K562 (cell line): ENCODE measurements at regions of chr9 and their contacts with region 1.

Region 1: GRCh38 chr9:13088720-13089427 is 190.6 kb downstream of the MPDZ start:
- DNase-seq: peak; percentile 47 to 58 (median 50)
- ATAC-seq: peak; percentile 70; the same call in 2 of the 3 replicates
- H3K4me3 ChIP-seq: no peak overlapping the region
- H3K27ac ChIP-seq: no peak overlapping the region
- H3K4me1 ChIP-seq: no peaks in the 10 kb centered on the region
- H3K27me3 ChIP-seq: no peaks in the 10 kb centered on the region
- CTCF ChIP-seq: peak; percentile 22 to 59 (median 39); a peak in 4 of 6 replicates
- EP300 ChIP-seq: no peak
- POLR2A ChIP-seq: no peak
- RAD21 ChIP-seq: peak; percentile 35 to 52

Region 2: GRCh38 chr9:12813960-12814876 is 274.7 kb before region 1 on chr9:
- CTCF ChIA-PET with region 1: no interaction called
- POLR2A ChIA-PET with region 1: no interaction called
- in situ Hi-C with region 1: no loop called
- intact Hi-C with region 1: no loop called
- DNase-seq: peak in 1 of 4 experiments; percentile 6
- ATAC-seq: 0 out of 3 replicates have a peak, but pooled peaks have one; percentile 32
- H3K4me3 ChIP-seq: no peak overlapping the region
- H3K27ac ChIP-seq: no peak overlapping the region
- H3K4me1 ChIP-seq: no peaks in the 10 kb centered on the region
- H3K27me3 ChIP-seq: no peaks in the 10 kb centered on the region
- CTCF ChIP-seq: no peak
- EP300 ChIP-seq: no peak
- POLR2A ChIP-seq: no peak
- RAD21 ChIP-seq: no peak

Region 3: GRCh38 chr9:13033959-13034693 is 54.7 kb before region 1 on chr9:
- CTCF ChIA-PET with region 1: interaction called, 10 read pairs
- POLR2A ChIA-PET with region 1: no interaction called
- in situ Hi-C with region 1: no loop called
- intact Hi-C with region 1: loop called (anchors 2 kb)
- DNase-seq: peak; percentile 43 to 66 (median 54)
- ATAC-seq: peak; percentile 91
- H3K4me3 ChIP-seq: no peak overlapping the region
- H3K27ac ChIP-seq: no peak overlapping the region
- H3K4me1 ChIP-seq: no peaks in the 10 kb centered on the region
- H3K27me3 ChIP-seq: no peaks in the 10 kb centered on the region
- CTCF ChIP-seq: peak; percentile 60 to 75 (median 70)
- EP300 ChIP-seq: no peak
- POLR2A ChIP-seq: no peak
- RAD21 ChIP-seq: peak; percentile 64 to 75

Region 4: GRCh38 chr9:13139641-13140171 is 50.8 kb after region 1 on chr9:
- CTCF ChIA-PET with region 1: no interaction called
- POLR2A ChIA-PET with region 1: no interaction called
- in situ Hi-C with region 1: no loop called
- intact Hi-C with region 1: no loop called
- DNase-seq: no peak
- ATAC-seq: no peak
- H3K4me3 ChIP-seq: no peak overlapping the region
- H3K27ac ChIP-seq: no peak overlapping the region
- H3K4me1 ChIP-seq: no peaks in the 10 kb centered on the region
- H3K27me3 ChIP-seq: no peaks in the 10 kb centered on the region
- CTCF ChIP-seq: no peak
- EP300 ChIP-seq: no peak
- POLR2A ChIP-seq: no peak
- RAD21 ChIP-seq: no peak

Region 5: GRCh38 chr9:13358128-13358527 is 269.3 kb after region 1 on chr9:
- CTCF ChIA-PET with region 1: no interaction called
- POLR2A ChIA-PET with region 1: no interaction called
- in situ Hi-C with region 1: no loop called
- intact Hi-C with region 1: no loop called
- DNase-seq: no peak
- ATAC-seq: no peak
- H3K4me3 ChIP-seq: no peak overlapping the region
- H3K27ac ChIP-seq: no peak overlapping the region
- H3K4me1 ChIP-seq: no peaks in the 10 kb centered on the region
- H3K27me3 ChIP-seq: no peaks in the 10 kb centered on the region
- CTCF ChIP-seq: no peak
- EP300 ChIP-seq: no peak
- POLR2A ChIP-seq: no peak
- RAD21 ChIP-seq: no peak